ENCODE measurements at regions of chr2 and their contacts with region 1.

Region 1: GRCh38 chr2:230160112-230160660 is 59.6 kb downstream of the SP110 start:
- DNase-seq: peak; percentile 52 to 73
- ATAC-seq: peak; percentile 75 to 83 (median 76)
- H3K4me3 ChIP-seq: no peak overlapping the region
- H3K4me3 Mint-ChIP-seq: peak overlapping the region; percentile 22
- H3K27ac ChIP-seq: no peak overlapping the region
- H3K27ac Mint-ChIP-seq: no peak overlapping the region
- H3K4me1 ChIP-seq: peaks cover 6% of the 10 kb centered on the region
- H3K4me1 Mint-ChIP-seq: peaks cover 13 to 22% of the 10 kb centered on the region in 2 donors
- H3K27me3 ChIP-seq: no peaks in the 10 kb centered on the region
- H3K27me3 Mint-ChIP-seq: no peaks in the 10 kb centered on the region
- CTCF ChIP-seq: peak; percentile 86

Region 2: DNA sequence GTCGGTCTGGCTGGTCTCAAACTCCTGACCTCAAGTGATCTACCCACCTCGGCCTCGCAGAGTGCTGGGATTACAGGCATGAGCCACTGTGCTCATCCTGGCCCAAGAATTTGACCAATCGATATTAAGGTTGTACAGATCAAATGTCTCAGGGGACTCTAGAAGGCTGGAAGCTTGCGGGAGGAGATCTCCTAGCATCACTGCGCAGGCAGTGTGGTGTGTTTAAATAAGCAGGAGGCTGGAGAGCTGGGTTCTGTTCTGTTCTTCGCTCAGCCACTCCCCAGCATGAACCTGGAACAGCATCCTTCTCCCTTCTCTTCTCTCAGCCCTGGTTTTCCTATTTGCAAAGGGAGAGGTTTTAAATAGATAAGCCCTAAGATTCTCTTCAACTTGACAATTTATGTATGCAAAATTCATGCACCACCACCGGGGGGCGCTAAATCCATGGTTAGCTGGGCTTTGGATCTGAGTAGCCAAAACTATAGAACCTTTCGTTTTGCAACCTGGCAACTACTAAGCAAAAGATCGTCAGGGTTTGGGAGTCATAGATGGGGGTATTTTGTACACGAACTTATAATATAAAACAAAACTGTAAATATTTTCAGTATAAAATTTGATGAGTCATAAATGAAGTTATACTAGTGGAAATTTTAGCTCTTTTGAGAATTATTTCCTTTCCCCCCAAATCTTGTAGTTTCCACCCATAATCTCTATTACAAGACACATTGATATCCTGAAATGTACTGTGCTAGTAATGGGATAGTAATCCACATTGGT is 152.1 kb before region 1 on chr2:
- intact Hi-C with region 1: loop called (anchors 1 kb)
- DNase-seq: peak; percentile 69 to 81
- ATAC-seq: peak; percentile 66 to 73 (median 69)
- H3K4me3 ChIP-seq: no peak overlapping the region
- H3K4me3 Mint-ChIP-seq: no peak overlapping the region
- H3K27ac ChIP-seq: no peak overlapping the region
- H3K27ac Mint-ChIP-seq: no peak overlapping the region
- H3K4me1 ChIP-seq: no peaks in the 10 kb centered on the region
- H3K4me1 Mint-ChIP-seq: peaks cover 0 to 11% of the 10 kb centered on the region in 2 donors
- H3K27me3 ChIP-seq: no peaks in the 10 kb centered on the region
- H3K27me3 Mint-ChIP-seq: no peaks in the 10 kb centered on the region
- CTCF ChIP-seq: peak; percentile 89

Region 3: GRCh38 chr2:230068016-230068650 is 92.1 kb before region 1 on chr2:
- intact Hi-C with region 1: loop called (anchors 5 kb)
- DNase-seq: peak; percentile 41 to 56
- ATAC-seq: peak; percentile 41 to 66 (median 59)
- H3K4me3 ChIP-seq: peak overlapping the region; percentile 54
- H3K4me3 Mint-ChIP-seq: peak overlapping the region; percentile 91
- H3K27ac ChIP-seq: no peak overlapping the region
- H3K27ac Mint-ChIP-seq: peak overlapping the region in 1 of 2 donors; percentile 75
- H3K4me1 ChIP-seq: peaks cover 18% of the 10 kb centered on the region
- H3K4me1 Mint-ChIP-seq: peaks cover 24% of the 10 kb centered on the region in 2 donors
- H3K27me3 ChIP-seq: no peaks in the 10 kb centered on the region
- H3K27me3 Mint-ChIP-seq: peaks cover 13 to 15% of the 10 kb centered on the region in 2 donors
- CTCF ChIP-seq: no peak

Region 4: DNA sequence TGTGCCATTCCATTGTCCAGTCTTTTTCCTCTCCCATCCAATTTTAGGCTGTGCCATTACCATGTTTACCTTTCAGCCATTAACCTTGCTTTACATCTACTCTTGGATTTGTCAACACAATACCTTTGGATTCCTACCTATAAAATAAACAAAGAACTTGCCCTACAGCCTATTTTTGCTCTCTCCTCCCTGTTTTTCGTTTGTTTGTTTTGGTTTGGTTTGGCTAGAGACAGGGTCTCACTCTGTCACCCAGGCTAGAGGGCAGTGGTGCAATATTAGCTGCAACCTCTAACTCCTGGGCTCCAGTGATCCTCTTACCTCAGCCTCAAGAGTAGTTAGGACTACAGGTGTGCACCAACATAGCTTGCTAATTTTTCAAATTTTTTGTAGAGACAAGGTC is 331.9 kb after region 1 on chr2:
- intact Hi-C with region 1: no loop called
- DNase-seq: no peak
- ATAC-seq: no peak
- H3K4me3 ChIP-seq: no peak overlapping the region
- H3K4me3 Mint-ChIP-seq: no peak overlapping the region
- H3K27ac ChIP-seq: no peak overlapping the region
- H3K27ac Mint-ChIP-seq: peak overlapping the region; percentile 44 to 57
- H3K4me1 ChIP-seq: peaks cover 5% of the 10 kb centered on the region
- H3K4me1 Mint-ChIP-seq: peaks cover 60 to 68% of the 10 kb centered on the region in 2 donors
- H3K27me3 ChIP-seq: no peaks in the 10 kb centered on the region
- H3K27me3 Mint-ChIP-seq: no peaks in the 10 kb centered on the region
- CTCF ChIP-seq: no peak